Mucosa of descending colon (tissue), 3 donors: ENCODE measurements at regions of chr2 and their contacts with region 1.

Region 1: GRCh38 chr2:112692496-112692911 is 28.3 kb upstream of the NT5DC4 start:
- DNase-seq: peak; percentile 69 to 83 (median 74)
- ATAC-seq: peak; percentile 93
- H3K4me3 ChIP-seq: no peak overlapping the region
- H3K4me1 ChIP-seq: peaks cover 2% of the 10 kb centered on the region
- CTCF ChIP-seq: no peak

Region 2: DNA sequence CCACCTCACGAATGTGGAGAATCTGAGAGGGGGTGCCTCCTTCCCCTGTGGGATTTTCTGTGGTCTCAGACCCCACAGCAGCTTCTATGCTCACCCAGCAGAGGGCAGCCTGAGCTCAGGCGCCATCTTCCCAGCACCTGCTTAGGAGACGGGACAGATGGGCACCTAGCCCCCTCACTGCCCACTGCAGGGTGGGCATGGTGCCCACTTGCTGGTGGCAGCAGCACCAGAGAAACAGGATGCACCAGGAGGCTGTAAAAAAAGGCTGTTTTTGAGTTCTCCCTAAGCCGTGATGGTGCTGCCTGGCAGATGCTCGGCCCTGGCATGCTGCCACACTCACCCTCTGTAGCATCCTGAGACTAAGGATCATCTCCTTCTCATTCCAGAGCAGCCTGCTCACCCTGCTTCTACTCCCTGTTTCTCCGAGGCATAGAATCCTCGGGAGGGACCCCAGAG is 65.9 kb before region 1 on chr2:
- intact Hi-C with region 1: loop called in 1 of 2 experiments (anchors 10 kb)
- DNase-seq: peak; percentile 62 to 75 (median 67)
- ATAC-seq: peak; percentile 71
- H3K4me3 ChIP-seq: no peak overlapping the region
- H3K4me1 ChIP-seq: peaks cover 13% of the 10 kb centered on the region
- CTCF ChIP-seq: peak; percentile 76

Region 3: GRCh38 chr2:112947374-112947773 is 254.9 kb after region 1 on chr2:
- intact Hi-C with region 1: no loop called
- DNase-seq: no peak
- ATAC-seq: peak; percentile 26
- H3K4me3 ChIP-seq: no peak overlapping the region
- H3K4me1 ChIP-seq: no peaks in the 10 kb centered on the region
- CTCF ChIP-seq: no peak